Sigmoid colon (tissue), 7 donors: ENCODE measurements at regions of chr2 and their contacts with region 1.

Region 1: GRCh38 chr2:226799181-226799975 is at the start of gene IRS1:
- DNase-seq: peak; percentile 91
- H3K4me3 ChIP-seq: peak within 1 kb of the TSS; percentile 61 to 91 (median 78)
- H3K27ac ChIP-seq: peak within 1 kb of the TSS; percentile 89 to 97 (median 96)
- H3K4me1 ChIP-seq: peaks cover 0 to 58% (median 40%) of the 10 kb centered on the region in 4 donors
- H3K27me3 ChIP-seq: no peaks in the 10 kb centered on the region
- CTCF ChIP-seq: peak in 1 of 4 experiments; percentile 49
- EP300 ChIP-seq: no peak
- POLR2A ChIP-seq: peak; percentile 6 to 18
- total RNA-seq, gene IRS1: 18.5 to 29.1 (median 23.7) TPM

Region 2: DNA sequence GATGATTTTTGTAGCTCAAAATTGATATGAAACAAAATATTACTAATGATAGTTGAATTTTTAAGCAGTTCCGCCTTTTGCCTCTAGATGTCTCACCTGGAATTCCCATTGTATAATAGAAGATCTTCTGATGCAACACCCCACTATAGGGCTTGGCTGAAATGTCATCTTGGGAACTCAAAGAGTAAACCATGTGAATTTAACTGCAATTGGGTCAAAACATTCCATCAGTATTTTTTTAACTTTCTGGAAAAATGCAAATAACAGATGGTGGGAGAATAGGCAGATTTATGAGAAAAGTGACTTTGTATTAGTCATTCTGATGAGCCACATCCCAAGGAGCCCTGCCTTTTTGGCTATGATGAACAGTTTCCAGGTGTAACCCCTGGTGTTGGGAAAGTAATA is 909.9 kb before region 1 on chr2:
- intact Hi-C with region 1: loop called (anchors 1 kb)
- DNase-seq: no peak
- H3K4me3 ChIP-seq: no peak overlapping the region
- H3K27ac ChIP-seq: no peak overlapping the region
- H3K4me1 ChIP-seq: peaks cover 0 to 11% (median under 1%) of the 10 kb centered on the region in 4 donors
- H3K27me3 ChIP-seq: no peaks in the 10 kb centered on the region
- CTCF ChIP-seq: peak; percentile 34 to 86 (median 74)
- EP300 ChIP-seq: no peak
- POLR2A ChIP-seq: no peak

Region 3: DNA sequence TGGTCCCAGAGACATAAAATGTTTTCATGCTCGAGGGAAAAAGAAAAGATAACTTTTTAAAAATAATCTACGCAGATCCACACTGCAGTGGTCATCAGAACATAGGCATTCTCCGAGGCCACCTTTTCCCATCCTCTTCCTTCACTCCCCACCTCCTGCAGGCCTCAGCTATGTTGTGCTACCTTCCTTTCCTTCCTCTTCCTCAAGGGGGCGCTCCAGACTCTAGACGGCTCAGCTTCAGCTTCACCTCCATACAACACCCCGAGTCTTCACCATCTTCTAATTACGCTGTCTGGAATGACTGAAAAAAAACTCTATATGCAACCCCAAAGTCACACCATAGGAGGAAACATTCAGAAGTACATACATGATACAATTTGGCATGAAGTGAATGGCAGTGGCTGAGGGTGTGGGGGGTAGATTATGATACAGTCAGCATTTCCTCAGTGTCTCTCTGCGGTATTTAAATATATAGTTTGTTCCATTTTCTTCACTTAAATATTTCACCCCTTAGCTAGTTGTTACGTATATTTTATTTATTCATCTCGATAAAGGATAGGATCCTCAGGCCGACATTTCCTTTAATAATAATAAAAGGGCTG is 583.4 kb before region 1 on chr2:
- intact Hi-C with region 1: loop called (anchors 2 kb)
- DNase-seq: peak; percentile 79
- H3K4me3 ChIP-seq: no peak overlapping the region
- H3K27ac ChIP-seq: no peak overlapping the region
- H3K4me1 ChIP-seq: peaks cover 0 to 17% (median 15%) of the 10 kb centered on the region in 4 donors
- H3K27me3 ChIP-seq: no peaks in the 10 kb centered on the region
- CTCF ChIP-seq: peak; percentile 21 to 59 (median 52)
- EP300 ChIP-seq: no peak
- POLR2A ChIP-seq: no peak

Region 4: GRCh38 chr2:226478109-226478809 is 321.1 kb before region 1 on chr2:
- intact Hi-C with region 1: loop called (anchors 1 kb)
- DNase-seq: peak; percentile 78
- H3K4me3 ChIP-seq: no peak overlapping the region
- H3K27ac ChIP-seq: peak overlapping the region; percentile 59 to 83 (median 74)
- H3K4me1 ChIP-seq: peaks cover 0 to 38% (median 16%) of the 10 kb centered on the region in 4 donors
- H3K27me3 ChIP-seq: no peaks in the 10 kb centered on the region
- CTCF ChIP-seq: no peak
- EP300 ChIP-seq: peak in 3 of 4 donors; percentile 60 to 71 (median 66)
- POLR2A ChIP-seq: no peak

Region 5: DNA sequence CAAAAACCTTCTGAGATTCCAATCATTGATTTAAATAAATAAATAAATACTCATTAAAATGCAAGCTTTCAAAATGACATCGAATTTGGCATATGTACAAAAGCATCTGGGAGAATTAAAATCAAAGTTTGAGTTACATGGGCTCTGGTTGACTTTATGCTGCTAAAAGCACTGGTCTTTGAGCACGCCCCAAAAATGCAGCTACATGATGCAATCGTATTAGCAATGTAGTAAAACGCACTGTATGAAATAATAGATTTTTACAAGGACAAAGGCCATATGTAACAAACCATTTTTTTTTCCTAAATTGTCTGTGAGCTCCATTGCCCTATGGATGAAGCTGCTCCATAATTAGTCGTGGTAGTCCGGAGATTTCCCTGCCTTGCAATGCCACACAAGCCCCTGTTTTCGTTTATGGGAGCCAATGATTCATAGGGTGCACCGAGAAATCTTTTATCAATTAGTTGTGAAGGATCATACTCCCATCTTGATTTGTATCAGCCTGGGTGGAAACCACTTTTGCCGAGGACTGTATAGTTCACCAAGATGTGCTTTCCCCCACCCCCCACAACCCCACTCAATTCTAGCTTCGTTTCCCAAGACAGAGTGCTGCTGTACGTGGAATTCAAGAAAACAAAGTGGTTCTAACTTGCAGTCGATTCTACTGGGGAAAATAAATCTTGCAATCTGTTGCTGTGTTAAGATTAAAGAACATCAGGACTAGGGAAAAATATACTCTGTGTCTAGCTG is 268.1 kb before region 1 on chr2:
- intact Hi-C with region 1: no loop called
- DNase-seq: no peak
- H3K4me3 ChIP-seq: no peak overlapping the region
- H3K27ac ChIP-seq: no peak overlapping the region
- H3K4me1 ChIP-seq: no peaks in the 10 kb centered on the region
- H3K27me3 ChIP-seq: no peaks in the 10 kb centered on the region
- CTCF ChIP-seq: no peak
- EP300 ChIP-seq: no peak
- POLR2A ChIP-seq: no peak

Region 6: GRCh38 chr2:226835796-226836547 is 36.6 kb after region 1 on chr2 and contains the start of gene RHBDD1:
- intact Hi-C with region 1: loop called (anchors 2 kb)
- DNase-seq: peak; percentile 97
- H3K4me3 ChIP-seq: peak within 1 kb of the TSS; percentile 75 to 92 (median 84)
- H3K27ac ChIP-seq: peak within 1 kb of the TSS; percentile 98 to 99 (median 99)
- H3K4me1 ChIP-seq: peaks cover 0 to 33% (median 26%) of the 10 kb centered on the region in 4 donors
- H3K27me3 ChIP-seq: no peaks in the 10 kb centered on the region
- CTCF ChIP-seq: no peak
- EP300 ChIP-seq: peak in 2 of 4 donors; percentile 20 to 63
- POLR2A ChIP-seq: peak; percentile 88 to 91
- total RNA-seq, gene RHBDD1: 17.5 to 28.0 (median 23.1) TPM

Region 7: DNA sequence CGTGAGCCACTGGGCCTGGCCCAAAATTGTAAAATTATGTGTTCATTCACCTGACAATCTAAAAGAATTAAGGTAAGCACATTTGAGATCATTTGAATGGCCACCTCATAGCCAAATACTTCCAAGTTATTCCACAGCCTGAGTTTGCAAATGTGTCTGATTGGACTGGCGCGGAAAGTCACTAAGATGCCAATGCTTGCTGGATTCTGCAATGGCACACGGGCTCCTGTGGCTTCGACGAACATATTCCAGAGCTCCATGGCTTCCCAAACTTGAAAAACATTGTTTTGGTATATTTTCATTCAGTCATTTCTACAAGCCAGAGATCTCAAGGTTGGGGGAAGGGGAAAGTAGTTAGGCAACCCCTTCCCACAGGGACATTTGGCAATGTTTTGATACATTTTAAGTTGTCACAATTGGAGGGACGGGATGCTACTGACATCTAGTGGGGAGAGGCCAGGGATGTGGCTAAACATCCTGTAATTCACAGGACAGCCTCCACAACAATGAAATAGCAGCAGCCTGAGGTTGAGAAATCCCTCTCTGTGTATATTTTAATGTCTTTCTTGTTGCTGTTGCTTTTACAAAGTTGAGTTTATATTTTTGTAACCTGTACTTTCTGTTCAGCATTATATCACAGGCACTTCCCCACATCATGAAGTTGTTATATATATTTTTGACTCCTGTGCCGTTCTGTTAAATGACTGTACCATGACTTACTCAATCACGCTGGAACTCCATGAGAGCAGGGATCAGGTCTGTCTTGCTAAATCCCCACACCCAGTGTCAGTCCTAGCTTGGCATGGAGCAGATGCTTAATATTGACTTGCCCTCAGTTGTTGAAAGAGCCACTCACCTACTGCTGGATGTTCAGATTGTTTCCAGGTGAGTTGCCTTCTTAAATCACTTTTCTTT is 307.7 kb after region 1 on chr2:
- intact Hi-C with region 1: loop called (anchors 5 kb)
- DNase-seq: no peak
- H3K4me3 ChIP-seq: no peak overlapping the region
- H3K27ac ChIP-seq: peak overlapping the region in 1 of 4 donors; percentile 6
- H3K4me1 ChIP-seq: peaks cover 0 to 5% (median 1%) of the 10 kb centered on the region in 4 donors
- H3K27me3 ChIP-seq: no peaks in the 10 kb centered on the region
- CTCF ChIP-seq: peak; percentile 55 to 72 (median 67)
- EP300 ChIP-seq: no peak
- POLR2A ChIP-seq: no peak